ENCODE measurements at regions of chr1 and their contacts with region 1.

Region 1: DNA sequence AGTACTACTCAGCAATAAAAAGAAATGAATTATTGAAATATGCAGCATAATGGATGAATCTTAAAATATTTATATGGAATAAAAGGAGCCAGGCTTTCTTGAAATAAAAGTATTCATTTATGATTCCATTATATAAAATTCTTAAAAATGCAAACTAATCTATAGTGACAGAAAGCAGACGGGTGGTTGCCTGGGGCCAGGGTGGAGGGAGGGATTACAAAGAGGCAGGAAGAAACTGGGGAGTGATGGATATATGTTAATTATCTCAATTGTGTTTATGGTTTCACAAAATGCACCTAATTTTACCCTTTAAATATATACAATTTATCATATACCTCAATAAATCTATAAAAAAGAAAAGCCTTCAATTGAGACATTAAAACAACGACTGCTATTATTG is 68.2 kb downstream of the PLEKHA6 start:
- DNase-seq: no peak
- H3K27ac ChIP-seq: no peak overlapping the region
- CTCF ChIP-seq: no peak

Region 2: GRCh38 chr1:204348722-204349121 is 57.1 kb after region 1 on chr1:
- CTCF ChIA-PET with region 1: no interaction called
- POLR2A ChIA-PET with region 1: no interaction called
- DNase-seq: no peak
- H3K27ac ChIP-seq: no peak overlapping the region
- CTCF ChIP-seq: no peak

Region 3: GRCh38 chr1:204533606-204534005 is 242.0 kb after region 1 on chr1:
- CTCF ChIA-PET with region 1: no interaction called
- POLR2A ChIA-PET with region 1: no interaction called
- DNase-seq: no peak
- H3K27ac ChIP-seq: no peak overlapping the region
- CTCF ChIP-seq: no peak

Region 4: GRCh38 chr1:204859861-204860274 is 568.3 kb after region 1 on chr1:
- CTCF ChIA-PET with region 1: no interaction called
- POLR2A ChIA-PET with region 1: interaction called, 10 read pairs
- DNase-seq: no peak
- H3K27ac ChIP-seq: no peak overlapping the region
- CTCF ChIP-seq: no peak